ENCODE measurements at regions of chr2 and their contacts with region 1.

Region 1: GRCh38 chr2:160994141-160995002 is 165.9 kb upstream of the TANK start:
- DNase-seq: peak; percentile 19 to 88 (median 62)
- ATAC-seq: peak; percentile 93
- H3K4me3 ChIP-seq: no peak overlapping the region
- H3K4me3 Mint-ChIP-seq: no peak overlapping the region
- H3K27ac ChIP-seq: no peak overlapping the region
- H3K27ac Mint-ChIP-seq: no peak overlapping the region
- H3K4me1 ChIP-seq: peaks cover 2% of the 10 kb centered on the region
- H3K4me1 Mint-ChIP-seq: peaks cover 5% of the 10 kb centered on the region
- H3K27me3 ChIP-seq: no peaks in the 10 kb centered on the region
- H3K27me3 Mint-ChIP-seq: no peaks in the 10 kb centered on the region
- CTCF ChIP-seq: peak; percentile 88

Region 2: DNA sequence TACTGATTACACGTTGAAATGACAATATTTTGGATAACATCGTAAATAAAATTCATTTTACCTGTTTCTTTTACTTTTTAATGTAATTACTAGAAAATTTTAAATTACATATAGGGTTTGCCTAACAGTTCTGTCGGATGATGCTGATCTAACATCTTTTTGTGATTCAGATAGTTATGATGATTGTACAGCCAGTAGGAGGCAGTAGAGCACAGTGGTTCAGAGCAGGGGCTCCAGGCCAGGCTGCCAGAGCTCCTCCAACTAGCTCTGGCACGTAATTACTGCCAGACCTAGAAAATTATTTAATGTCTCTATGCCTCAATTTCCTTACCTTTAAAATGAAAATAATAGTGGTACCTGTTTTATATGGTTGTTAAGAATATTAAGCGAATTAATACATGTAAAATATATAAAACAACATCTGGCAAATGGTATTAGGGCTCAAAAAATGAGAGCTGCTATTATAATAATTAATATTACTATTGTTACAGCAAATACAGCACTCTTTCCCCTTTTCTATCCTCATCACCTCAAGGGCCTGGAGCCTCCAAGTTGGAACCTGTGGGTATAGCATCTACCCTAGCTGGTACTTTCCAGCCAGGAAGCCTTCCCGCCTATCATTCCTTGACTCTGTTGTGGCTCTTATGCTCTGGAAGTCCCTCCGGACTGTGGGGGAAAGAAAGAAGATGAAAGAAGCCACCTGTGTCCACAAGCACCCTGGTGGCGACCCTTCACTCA is 884.3 kb before region 1 on chr2:
- CTCF ChIA-PET with region 1: interaction called, 14 read pairs
- POLR2A ChIA-PET with region 1: interaction called, 4 read pairs
- intact Hi-C with region 1: loop called (anchors 1 to 2 kb)
- DNase-seq: peak in 13 of 14 experiments; percentile 11 to 78 (median 31)
- ATAC-seq: peak; percentile 84
- H3K4me3 ChIP-seq: no peak overlapping the region
- H3K4me3 Mint-ChIP-seq: no peak overlapping the region
- H3K27ac ChIP-seq: no peak overlapping the region
- H3K27ac Mint-ChIP-seq: no peak overlapping the region
- H3K4me1 ChIP-seq: no peaks in the 10 kb centered on the region
- H3K4me1 Mint-ChIP-seq: no peaks in the 10 kb centered on the region
- H3K27me3 ChIP-seq: peaks cover 0 to 4% of the 10 kb centered on the region in 2 experiments
- H3K27me3 Mint-ChIP-seq: peaks cover 6% of the 10 kb centered on the region
- CTCF ChIP-seq: peak; percentile 81

Region 3: GRCh38 chr2:160210599-160211138 is 783.7 kb before region 1 on chr2:
- CTCF ChIA-PET with region 1: interaction called, 3 read pairs
- POLR2A ChIA-PET with region 1: no interaction called
- intact Hi-C with region 1: loop called in 1 of 2 experiments (anchors 1 kb)
- DNase-seq: peak; percentile 50 to 81 (median 61)
- ATAC-seq: peak; percentile 90
- H3K4me3 ChIP-seq: no peak overlapping the region
- H3K4me3 Mint-ChIP-seq: no peak overlapping the region
- H3K27ac ChIP-seq: no peak overlapping the region
- H3K27ac Mint-ChIP-seq: no peak overlapping the region
- H3K4me1 ChIP-seq: no peaks in the 10 kb centered on the region
- H3K4me1 Mint-ChIP-seq: peaks cover 6% of the 10 kb centered on the region
- H3K27me3 ChIP-seq: no peaks in the 10 kb centered on the region
- H3K27me3 Mint-ChIP-seq: no peaks in the 10 kb centered on the region
- CTCF ChIP-seq: peak; percentile 84

Region 4: DNA sequence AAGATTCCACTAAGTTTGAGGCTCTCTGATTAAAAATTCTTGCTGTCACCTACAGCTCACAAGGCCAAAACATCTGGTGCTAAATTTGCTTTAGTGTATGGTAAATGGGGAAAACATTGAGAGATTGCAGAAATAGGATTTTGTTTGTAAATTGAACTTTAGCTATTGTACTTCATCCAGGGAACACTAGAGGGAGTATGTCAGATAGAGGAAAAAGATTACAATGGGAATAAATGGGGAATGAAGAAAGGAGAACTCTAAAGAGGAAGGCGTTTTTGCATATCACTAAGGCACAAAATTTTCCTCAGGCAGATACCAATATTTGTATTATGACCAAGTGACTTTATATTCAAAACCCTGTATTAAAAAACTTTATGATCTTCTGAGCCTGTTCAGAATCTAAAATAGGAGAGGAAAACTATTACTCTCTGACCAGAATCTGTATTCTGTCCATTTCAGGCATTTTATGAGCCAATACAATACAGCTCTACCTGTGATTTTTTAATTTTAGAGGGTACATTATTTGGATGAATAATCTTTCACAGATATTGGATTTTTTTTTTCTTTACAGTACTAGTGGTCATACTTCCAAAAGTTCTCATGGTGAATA is 742.0 kb before region 1 on chr2:
- CTCF ChIA-PET with region 1: interaction called, 18 read pairs
- POLR2A ChIA-PET with region 1: interaction called, 11 read pairs
- intact Hi-C with region 1: loop called (anchors 1 to 2 kb)
- DNase-seq: peak in 3 of 14 experiments; percentile 25 to 55 (median 42)
- ATAC-seq: no peak
- H3K4me3 ChIP-seq: no peak overlapping the region
- H3K4me3 Mint-ChIP-seq: no peak overlapping the region
- H3K27ac ChIP-seq: no peak overlapping the region
- H3K27ac Mint-ChIP-seq: no peak overlapping the region
- H3K4me1 ChIP-seq: no peaks in the 10 kb centered on the region
- H3K4me1 Mint-ChIP-seq: no peaks in the 10 kb centered on the region
- H3K27me3 ChIP-seq: no peaks in the 10 kb centered on the region
- H3K27me3 Mint-ChIP-seq: no peaks in the 10 kb centered on the region
- CTCF ChIP-seq: peak; percentile 87

Region 5: DNA sequence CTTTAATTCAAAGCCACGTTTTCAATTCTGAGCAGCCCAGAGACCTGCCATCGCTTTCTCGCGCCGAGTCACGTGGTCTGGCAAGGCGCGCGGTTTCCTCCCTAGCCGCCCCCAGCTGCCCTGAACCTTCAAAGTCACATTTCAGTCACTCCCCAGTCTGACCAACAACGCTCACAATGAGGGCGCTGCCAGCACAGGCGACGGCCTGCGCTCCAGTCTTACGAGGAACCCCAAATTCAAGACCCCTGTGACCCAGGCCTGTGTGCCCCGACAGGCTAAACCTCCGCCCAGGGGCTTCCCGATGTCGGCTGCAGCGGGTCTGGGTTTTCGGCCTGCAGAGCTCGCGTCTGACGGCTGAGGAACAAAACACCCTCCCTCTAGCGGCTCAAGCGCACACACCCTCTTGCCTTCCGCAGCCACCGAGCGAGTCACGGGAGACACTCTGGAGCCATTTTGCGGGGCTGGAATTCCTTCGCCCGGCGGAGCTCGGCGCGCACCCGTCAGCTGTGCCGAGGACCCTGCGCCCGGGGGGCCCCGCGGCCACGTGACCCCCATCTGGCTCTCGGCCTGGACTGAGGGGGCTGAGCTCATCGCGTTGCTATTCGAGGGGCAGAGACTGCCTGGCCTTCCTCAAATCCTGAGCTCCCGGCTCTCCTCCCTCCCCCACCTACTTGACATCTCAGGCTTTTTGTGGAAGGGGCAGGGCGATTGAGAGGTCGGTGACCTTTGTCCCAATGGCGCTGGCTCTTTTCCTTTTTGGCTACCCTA is 724.4 kb before region 1 on chr2:
- CTCF ChIA-PET with region 1: interaction called, 12 read pairs
- POLR2A ChIA-PET with region 1: no interaction called
- intact Hi-C with region 1: no loop called
- DNase-seq: peak; percentile 49 to 87 (median 58)
- ATAC-seq: peak; percentile 84
- H3K4me3 ChIP-seq: peak overlapping the region; percentile 62
- H3K4me3 Mint-ChIP-seq: peak overlapping the region; percentile 88
- H3K27ac ChIP-seq: peak overlapping the region; percentile 38 to 77
- H3K27ac Mint-ChIP-seq: peak overlapping the region; percentile 96
- H3K4me1 ChIP-seq: peaks cover 26% of the 10 kb centered on the region
- H3K4me1 Mint-ChIP-seq: peaks cover 42% of the 10 kb centered on the region
- H3K27me3 ChIP-seq: no peaks in the 10 kb centered on the region
- H3K27me3 Mint-ChIP-seq: no peaks in the 10 kb centered on the region
- CTCF ChIP-seq: peak; percentile 49

Region 6: GRCh38 chr2:160324161-160324800 is 670.1 kb before region 1 on chr2:
- CTCF ChIA-PET with region 1: interaction called, 19 read pairs
- POLR2A ChIA-PET with region 1: interaction called, 8 read pairs
- intact Hi-C with region 1: loop called (anchors 1 kb)
- DNase-seq: peak; percentile 12 to 66 (median 29)
- ATAC-seq: no peak
- H3K4me3 ChIP-seq: no peak overlapping the region
- H3K4me3 Mint-ChIP-seq: peak overlapping the region; percentile 12
- H3K27ac ChIP-seq: no peak overlapping the region
- H3K27ac Mint-ChIP-seq: peak overlapping the region; percentile 14
- H3K4me1 ChIP-seq: peaks cover 37% of the 10 kb centered on the region
- H3K4me1 Mint-ChIP-seq: peaks cover 93% of the 10 kb centered on the region
- H3K27me3 ChIP-seq: no peaks in the 10 kb centered on the region
- H3K27me3 Mint-ChIP-seq: no peaks in the 10 kb centered on the region
- CTCF ChIP-seq: peak; percentile 76

Region 7: GRCh38 chr2:160353166-160353565 is 641.2 kb before region 1 on chr2:
- CTCF ChIA-PET with region 1: no interaction called
- POLR2A ChIA-PET with region 1: no interaction called
- intact Hi-C with region 1: loop called (anchors 1 to 2 kb)
- DNase-seq: peak in 10 of 14 experiments; percentile 11 to 67 (median 18)
- ATAC-seq: peak; percentile 90
- H3K4me3 ChIP-seq: no peak overlapping the region
- H3K4me3 Mint-ChIP-seq: peak overlapping the region; percentile 22
- H3K27ac ChIP-seq: no peak overlapping the region
- H3K27ac Mint-ChIP-seq: peak overlapping the region; percentile 46
- H3K4me1 ChIP-seq: no peaks in the 10 kb centered on the region
- H3K4me1 Mint-ChIP-seq: peaks cover 87% of the 10 kb centered on the region
- H3K27me3 ChIP-seq: no peaks in the 10 kb centered on the region
- H3K27me3 Mint-ChIP-seq: no peaks in the 10 kb centered on the region
- CTCF ChIP-seq: peak; percentile 60